ENCODE measurements at regions of chr1 and their contacts with region 1.

Region 1: GRCh38 chr1:161225534-161226319 is at the start of gene TOMM40L:
- DNase-seq: peak; percentile 100
- H3K4me3 Mint-ChIP-seq: peak within 1 kb of the TSS; percentile 90
- H3K27ac Mint-ChIP-seq: peak within 1 kb of the TSS; percentile 88
- H3K4me1 Mint-ChIP-seq: peaks cover 22% of the 10 kb centered on the region
- H3K27me3 Mint-ChIP-seq: no peaks in the 10 kb centered on the region
- CTCF ChIP-seq: peak; percentile 62
- total RNA-seq, gene TOMM40L: 10.0 and 12.3 TPM in 2 replicates

Region 2: DNA sequence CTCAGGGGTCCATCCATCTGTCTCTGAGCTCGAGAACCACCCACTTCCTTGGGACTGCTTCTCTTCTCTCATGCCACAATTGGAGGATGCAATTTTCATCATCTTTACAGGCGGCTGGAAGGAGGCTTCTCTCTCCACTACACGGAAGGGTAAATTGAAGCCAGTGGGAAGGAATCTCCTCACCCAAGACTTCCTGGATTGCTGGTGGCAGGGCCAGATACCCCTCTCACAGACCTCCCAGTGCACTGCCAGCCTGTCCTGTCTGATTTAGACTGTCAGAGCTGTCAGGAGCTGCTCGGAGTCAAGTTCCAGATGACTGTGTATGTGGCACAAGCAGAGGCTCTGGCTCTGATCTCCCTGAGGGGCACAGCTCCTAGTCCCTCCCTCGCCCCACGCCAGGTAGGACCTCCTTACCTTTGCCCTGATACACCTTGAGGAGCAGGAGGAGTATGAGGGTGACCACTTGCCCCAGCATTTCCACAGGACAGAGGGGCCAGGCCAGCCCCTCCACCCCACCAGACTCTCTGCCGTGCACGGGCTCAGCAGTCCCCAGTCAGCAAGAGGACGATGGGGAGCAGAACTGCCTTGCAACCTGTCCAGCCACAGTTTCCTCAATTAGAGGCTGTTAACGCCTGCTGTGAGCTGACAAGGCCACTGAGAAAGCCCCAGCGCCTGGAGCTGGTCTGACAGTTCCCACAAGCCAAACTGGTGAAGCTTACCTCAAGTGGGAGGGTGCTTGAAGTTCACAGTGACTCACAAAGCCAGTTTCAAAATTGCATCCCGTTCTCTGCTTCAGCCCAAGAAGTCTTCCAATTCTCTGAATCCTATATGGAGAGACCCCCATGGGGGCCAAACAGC is 363.3 kb before region 1 on chr1 and contains the start of gene CD244:
- CTCF ChIA-PET with region 1: no interaction called
- POLR2A ChIA-PET with region 1: no interaction called
- intact Hi-C with region 1: no loop called
- DNase-seq: no peak
- H3K4me3 Mint-ChIP-seq: no peak within 1 kb of the TSS
- H3K27ac Mint-ChIP-seq: no peak within 1 kb of the TSS
- H3K4me1 Mint-ChIP-seq: no peaks in the 10 kb centered on the region
- H3K27me3 Mint-ChIP-seq: no peaks in the 10 kb centered on the region
- CTCF ChIP-seq: no peak
- total RNA-seq, gene CD244: not detected in 2 replicates

Region 3: GRCh38 chr1:161177112-161177935 is 48.4 kb before region 1 on chr1 and contains the start of gene B4GALT3:
- CTCF ChIA-PET with region 1: interaction called, 54 read pairs
- POLR2A ChIA-PET with region 1: interaction called, 12 read pairs
- intact Hi-C with region 1: loop called (anchors 1 kb)
- DNase-seq: peak; percentile 87
- H3K4me3 Mint-ChIP-seq: peak within 1 kb of the TSS; percentile 86
- H3K27ac Mint-ChIP-seq: peak within 1 kb of the TSS; percentile 92
- H3K4me1 Mint-ChIP-seq: peaks cover 37% of the 10 kb centered on the region
- H3K27me3 Mint-ChIP-seq: no peaks in the 10 kb centered on the region
- CTCF ChIP-seq: no peak
- total RNA-seq, gene B4GALT3: 50.0 and 51.7 TPM in 2 replicates

Region 4: GRCh38 chr1:161209790-161210409 is 15.8 kb before region 1 on chr1:
- CTCF ChIA-PET with region 1: interaction called, 444 read pairs
- POLR2A ChIA-PET with region 1: interaction called, 81 read pairs
- intact Hi-C with region 1: loop called (anchors 1 kb)
- DNase-seq: peak; percentile 91
- H3K4me3 Mint-ChIP-seq: no peak overlapping the region
- H3K27ac Mint-ChIP-seq: no peak overlapping the region
- H3K4me1 Mint-ChIP-seq: peaks cover 25% of the 10 kb centered on the region
- H3K27me3 Mint-ChIP-seq: no peaks in the 10 kb centered on the region
- CTCF ChIP-seq: peak; percentile 95

Region 5: GRCh38 chr1:161258439-161259344 is 33.0 kb after region 1 on chr1 and contains the start of gene PCP4L1:
- CTCF ChIA-PET with region 1: interaction called, 46 read pairs
- POLR2A ChIA-PET with region 1: no interaction called
- intact Hi-C with region 1: no loop called
- DNase-seq: peak; percentile 56
- H3K4me3 Mint-ChIP-seq: peak within 1 kb of the TSS; percentile 50
- H3K27ac Mint-ChIP-seq: no peak within 1 kb of the TSS
- H3K4me1 Mint-ChIP-seq: no peaks in the 10 kb centered on the region
- H3K27me3 Mint-ChIP-seq: peaks cover 50% of the 10 kb centered on the region
- CTCF ChIP-seq: no peak
- total RNA-seq, gene PCP4L1: not detected in 2 replicates

Region 6: DNA sequence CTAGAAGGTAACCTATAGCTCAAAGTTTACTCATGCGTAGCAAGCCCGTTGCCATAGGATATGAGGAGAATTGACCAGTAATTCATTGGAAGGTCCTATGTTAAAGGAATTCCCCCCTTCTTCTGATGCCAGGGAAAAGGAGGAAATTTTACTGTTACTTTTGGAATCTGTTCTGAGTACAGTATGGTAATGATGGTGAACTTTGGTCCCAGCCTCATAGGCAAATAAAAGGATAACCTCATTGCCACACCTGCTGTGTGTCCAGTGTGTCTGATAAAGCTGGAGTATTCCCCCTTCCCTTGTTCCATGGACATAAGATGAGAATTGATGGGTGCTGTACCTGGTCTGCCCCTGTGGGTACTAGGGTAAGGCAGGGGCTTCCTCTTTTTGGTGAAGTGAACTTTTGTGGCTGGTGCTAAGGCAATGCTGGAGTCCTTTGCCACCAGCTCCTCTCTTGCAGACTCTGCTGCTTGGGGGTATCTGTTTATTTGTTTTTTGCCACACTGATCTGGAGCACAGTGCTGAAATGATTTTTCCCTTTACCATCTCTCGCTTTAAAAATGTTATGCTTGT is 61.8 kb after region 1 on chr1:
- CTCF ChIA-PET with region 1: interaction called, 357 read pairs
- POLR2A ChIA-PET with region 1: interaction called, 13 read pairs
- intact Hi-C with region 1: loop called (anchors 1 kb)
- DNase-seq: no peak
- H3K4me3 Mint-ChIP-seq: no peak overlapping the region
- H3K27ac Mint-ChIP-seq: no peak overlapping the region
- H3K4me1 Mint-ChIP-seq: no peaks in the 10 kb centered on the region
- H3K27me3 Mint-ChIP-seq: peaks cover 58% of the 10 kb centered on the region
- CTCF ChIP-seq: no peak

Region 7: DNA sequence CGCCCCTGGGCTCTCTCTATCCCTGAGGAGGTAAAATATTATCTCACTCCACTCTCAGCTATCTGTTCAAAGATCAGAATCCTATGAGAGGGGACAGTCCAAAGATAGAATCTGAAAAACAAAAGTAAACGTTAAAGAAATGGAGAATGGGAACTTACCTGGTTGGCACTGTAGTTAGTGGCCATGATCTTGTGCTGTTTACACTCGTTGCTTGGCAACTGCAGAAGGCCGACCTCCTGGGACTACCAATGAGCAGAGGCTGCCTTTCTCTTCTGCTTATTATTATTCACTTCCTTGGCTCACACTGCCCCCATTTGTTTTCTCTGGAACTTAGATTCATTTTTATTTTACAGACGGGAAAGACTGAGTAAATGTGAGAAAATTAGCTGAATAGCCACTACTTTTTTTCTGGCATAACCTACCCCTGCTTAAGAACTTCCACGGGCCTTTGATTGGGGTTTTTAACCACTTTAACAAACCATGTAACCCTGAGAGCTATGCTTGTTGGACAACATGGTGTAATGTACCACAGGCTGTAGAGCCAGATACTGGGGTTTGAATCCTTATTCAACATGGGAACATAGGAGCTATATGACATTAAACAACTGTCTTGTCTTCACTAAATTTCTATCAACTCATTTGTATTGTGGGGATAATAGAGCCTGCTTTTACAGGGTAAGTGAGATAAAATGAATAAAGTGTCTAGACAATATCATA is 142.1 kb after region 1 on chr1 and contains the start of gene CFAP126:
- CTCF ChIA-PET with region 1: interaction called, 42 read pairs
- POLR2A ChIA-PET with region 1: interaction called, 3 read pairs
- intact Hi-C with region 1: no loop called
- DNase-seq: peak; percentile 75
- H3K4me3 Mint-ChIP-seq: no peak within 1 kb of the TSS
- H3K27ac Mint-ChIP-seq: peak within 1 kb of the TSS; percentile 36
- H3K4me1 Mint-ChIP-seq: peaks cover 5% of the 10 kb centered on the region
- H3K27me3 Mint-ChIP-seq: no peaks in the 10 kb centered on the region
- CTCF ChIP-seq: no peak
- total RNA-seq, gene CFAP126: not detected in 2 replicates

Region 8: GRCh38 chr1:161389691-161390558 is 164.2 kb after region 1 on chr1:
- CTCF ChIA-PET with region 1: interaction called, 339 read pairs
- POLR2A ChIA-PET with region 1: interaction called, 33 read pairs
- intact Hi-C with region 1: no loop called
- DNase-seq: peak; percentile 100
- H3K4me3 Mint-ChIP-seq: peak overlapping the region; percentile 88
- H3K27ac Mint-ChIP-seq: peak overlapping the region; percentile 99
- H3K4me1 Mint-ChIP-seq: peaks cover 16% of the 10 kb centered on the region
- H3K27me3 Mint-ChIP-seq: no peaks in the 10 kb centered on the region
- CTCF ChIP-seq: no peak

Measured in MCF 10A (cell line).